ENCODE measurements at regions of chr7 and their contacts with region 1.

Region 1: GRCh38 chr7:131115340-131115739 is 212.3 kb upstream of the MKLN1 start:
- DNase-seq: no peak
- ATAC-seq: no peak
- H3K4me3 ChIP-seq: no peak overlapping the region
- H3K27ac ChIP-seq: no peak overlapping the region
- H3K4me1 ChIP-seq: peaks cover 16 to 20% of the 10 kb centered on the region in 2 donors
- H3K27me3 ChIP-seq: no peaks in the 10 kb centered on the region
- CTCF ChIP-seq: no peak
- POLR2A ChIP-seq: no peak

Region 2: DNA sequence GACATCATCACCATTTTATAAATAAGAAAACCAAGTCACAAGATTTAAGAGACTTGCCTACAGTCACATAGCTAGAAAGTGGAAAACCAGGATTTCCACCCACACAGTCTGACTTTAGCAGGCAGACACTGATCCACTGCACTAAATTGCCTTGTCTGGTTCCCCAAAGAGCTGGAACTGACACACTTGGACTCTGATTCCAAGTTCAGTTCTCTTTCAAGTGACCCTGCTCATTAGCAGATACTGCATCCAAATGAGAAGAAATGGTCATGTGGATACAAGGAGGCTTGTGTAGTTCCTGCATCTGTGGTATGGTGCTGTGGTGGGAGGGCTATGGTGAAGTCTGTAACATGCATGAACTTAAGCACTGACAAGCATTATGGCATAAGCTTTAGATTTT is 32.3 kb after region 1 on chr7:
- in situ Hi-C with region 1: no loop called
- intact Hi-C with region 1: loop called (anchors 2 kb)
- DNase-seq: no peak
- ATAC-seq: peak in 1 of 2 donors; percentile 28
- H3K4me3 ChIP-seq: no peak overlapping the region
- H3K27ac ChIP-seq: peak overlapping the region; percentile 59 to 88 (median 78)
- H3K4me1 ChIP-seq: peaks cover 32 to 40% of the 10 kb centered on the region in 2 donors
- H3K27me3 ChIP-seq: no peaks in the 10 kb centered on the region
- CTCF ChIP-seq: no peak
- POLR2A ChIP-seq: no peak

Region 3: GRCh38 chr7:131370523-131370968 is 255.2 kb after region 1 on chr7:
- in situ Hi-C with region 1: no loop called
- intact Hi-C with region 1: no loop called
- DNase-seq: no peak
- ATAC-seq: no peak
- H3K4me3 ChIP-seq: no peak overlapping the region
- H3K27ac ChIP-seq: no peak overlapping the region
- H3K4me1 ChIP-seq: peaks cover 82% of the 10 kb centered on the region in 2 donors
- H3K27me3 ChIP-seq: no peaks in the 10 kb centered on the region
- CTCF ChIP-seq: no peak
- POLR2A ChIP-seq: no peak

Measured in gastrocnemius medialis (tissue), 4 donors.